ENCODE measurements at regions of chr1 and their contacts with region 1.

Region 1: GRCh38 chr1:31923901-31924535 is 14.2 kb downstream of the PTP4A2 start:
- DNase-seq: no peak
- ATAC-seq: no peak
- H3K4me3 Mint-ChIP-seq: peak overlapping the region; percentile 46
- H3K27ac Mint-ChIP-seq: peak overlapping the region; percentile 89
- H3K4me1 Mint-ChIP-seq: peaks cover 72% of the 10 kb centered on the region
- H3K27me3 Mint-ChIP-seq: no peaks in the 10 kb centered on the region
- CTCF ChIP-seq: no peak

Region 2: DNA sequence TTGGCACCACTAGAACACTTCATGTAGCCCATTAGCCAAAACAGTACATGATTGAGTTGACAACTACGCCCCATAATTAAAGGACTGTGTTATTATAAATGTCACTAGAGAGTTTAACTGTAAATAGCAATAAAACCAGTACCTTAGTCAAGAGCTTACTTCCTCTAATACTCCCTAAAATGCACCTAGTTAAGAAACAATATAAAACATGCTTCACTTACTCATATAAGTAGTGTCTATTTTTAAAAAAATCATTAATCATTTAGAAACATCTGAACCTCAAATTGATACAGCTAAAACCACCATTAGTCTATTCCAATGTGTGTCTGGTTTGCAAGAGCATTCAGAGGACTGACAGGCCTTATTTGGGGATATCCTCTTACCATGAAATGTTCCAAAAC is 11.2 kb before region 1 on chr1:
- CTCF ChIA-PET with region 1: interaction called, 11 read pairs
- POLR2A ChIA-PET with region 1: interaction called, 4 read pairs
- intact Hi-C with region 1: no loop called
- DNase-seq: no peak
- ATAC-seq: peak; percentile 67
- H3K4me3 Mint-ChIP-seq: no peak overlapping the region
- H3K27ac Mint-ChIP-seq: peak overlapping the region; percentile 75
- H3K4me1 Mint-ChIP-seq: peaks cover 62% of the 10 kb centered on the region
- H3K27me3 Mint-ChIP-seq: no peaks in the 10 kb centered on the region
- CTCF ChIP-seq: no peak

Region 3: DNA sequence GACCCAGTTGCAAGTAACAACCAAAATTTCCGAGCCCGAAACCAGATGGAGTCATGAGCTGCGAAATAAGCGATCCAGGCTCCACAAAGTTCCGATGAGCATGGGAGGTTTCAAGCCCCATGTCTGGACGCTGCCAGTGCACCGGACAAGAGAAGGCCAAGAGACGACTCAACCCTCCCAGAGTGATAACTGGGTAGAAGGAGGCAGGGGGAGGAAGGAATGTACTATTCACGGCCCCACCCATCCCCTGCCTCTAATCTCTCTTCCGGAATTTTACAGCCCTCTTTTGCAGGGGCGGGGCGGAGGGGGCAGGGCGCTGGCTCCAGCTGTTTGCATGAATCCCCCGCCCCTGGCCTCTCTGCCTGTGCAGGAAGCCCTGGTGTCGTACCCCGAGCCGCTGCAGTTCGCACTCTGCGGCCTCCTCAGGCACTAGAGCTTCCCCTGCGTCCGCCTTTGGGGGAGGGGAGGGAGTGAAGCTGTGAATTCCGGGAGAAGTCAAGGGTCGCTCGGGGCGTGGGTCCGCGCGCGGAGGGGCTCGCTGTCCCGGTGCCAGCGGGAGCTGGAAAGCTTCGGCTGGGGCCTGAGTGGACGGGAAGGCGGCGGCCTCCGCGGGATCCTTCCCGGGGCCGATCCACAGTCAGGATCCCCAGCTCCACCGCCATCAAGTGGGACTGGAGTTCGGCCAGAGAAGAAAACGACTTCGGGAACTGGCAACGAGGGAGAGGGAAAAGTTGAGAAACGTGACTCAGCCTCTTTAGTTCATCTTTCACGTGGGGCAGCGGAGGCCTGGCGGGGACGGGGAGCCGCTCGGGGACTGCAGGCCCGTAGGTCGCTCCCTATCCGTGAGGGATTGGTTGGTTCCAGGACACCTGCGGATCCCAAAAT is 20.4 kb after region 1 on chr1:
- CTCF ChIA-PET with region 1: interaction called, 14 read pairs
- POLR2A ChIA-PET with region 1: interaction called, 23 read pairs
- intact Hi-C with region 1: no loop called
- DNase-seq: peak; percentile 95
- ATAC-seq: peak; percentile 57
- H3K4me3 Mint-ChIP-seq: peak overlapping the region; percentile 70
- H3K27ac Mint-ChIP-seq: peak overlapping the region; percentile 92
- H3K4me1 Mint-ChIP-seq: peaks cover 53% of the 10 kb centered on the region
- H3K27me3 Mint-ChIP-seq: no peaks in the 10 kb centered on the region
- CTCF ChIP-seq: no peak

Region 4: GRCh38 chr1:31955917-31956736 is 32.1 kb after region 1 on chr1:
- CTCF ChIA-PET with region 1: interaction called, 6 read pairs
- POLR2A ChIA-PET with region 1: interaction called, 12 read pairs
- intact Hi-C with region 1: loop called (anchors 5 kb)
- DNase-seq: peak; percentile 96
- ATAC-seq: peak; percentile 80
- H3K4me3 Mint-ChIP-seq: peak overlapping the region; percentile 62
- H3K27ac Mint-ChIP-seq: peak overlapping the region; percentile 95
- H3K4me1 Mint-ChIP-seq: peaks cover 66% of the 10 kb centered on the region
- H3K27me3 Mint-ChIP-seq: no peaks in the 10 kb centered on the region
- CTCF ChIP-seq: peak; percentile 13

Region 5: GRCh38 chr1:31977385-31978131 is 53.5 kb after region 1 on chr1:
- CTCF ChIA-PET with region 1: no interaction called
- POLR2A ChIA-PET with region 1: no interaction called
- intact Hi-C with region 1: no loop called
- DNase-seq: no peak
- ATAC-seq: no peak
- H3K4me3 Mint-ChIP-seq: no peak overlapping the region
- H3K27ac Mint-ChIP-seq: peak overlapping the region; percentile 57
- H3K4me1 Mint-ChIP-seq: peaks cover 19% of the 10 kb centered on the region
- H3K27me3 Mint-ChIP-seq: no peaks in the 10 kb centered on the region
- CTCF ChIP-seq: no peak

Measured in activated CD8-positive, alpha-beta T cell treated with anti-CD3 and anti-CD28 coated beads for 36 hours (primary cell).